ENCODE measurements at regions of chr1 and their contacts with region 1.

Region 1: DNA sequence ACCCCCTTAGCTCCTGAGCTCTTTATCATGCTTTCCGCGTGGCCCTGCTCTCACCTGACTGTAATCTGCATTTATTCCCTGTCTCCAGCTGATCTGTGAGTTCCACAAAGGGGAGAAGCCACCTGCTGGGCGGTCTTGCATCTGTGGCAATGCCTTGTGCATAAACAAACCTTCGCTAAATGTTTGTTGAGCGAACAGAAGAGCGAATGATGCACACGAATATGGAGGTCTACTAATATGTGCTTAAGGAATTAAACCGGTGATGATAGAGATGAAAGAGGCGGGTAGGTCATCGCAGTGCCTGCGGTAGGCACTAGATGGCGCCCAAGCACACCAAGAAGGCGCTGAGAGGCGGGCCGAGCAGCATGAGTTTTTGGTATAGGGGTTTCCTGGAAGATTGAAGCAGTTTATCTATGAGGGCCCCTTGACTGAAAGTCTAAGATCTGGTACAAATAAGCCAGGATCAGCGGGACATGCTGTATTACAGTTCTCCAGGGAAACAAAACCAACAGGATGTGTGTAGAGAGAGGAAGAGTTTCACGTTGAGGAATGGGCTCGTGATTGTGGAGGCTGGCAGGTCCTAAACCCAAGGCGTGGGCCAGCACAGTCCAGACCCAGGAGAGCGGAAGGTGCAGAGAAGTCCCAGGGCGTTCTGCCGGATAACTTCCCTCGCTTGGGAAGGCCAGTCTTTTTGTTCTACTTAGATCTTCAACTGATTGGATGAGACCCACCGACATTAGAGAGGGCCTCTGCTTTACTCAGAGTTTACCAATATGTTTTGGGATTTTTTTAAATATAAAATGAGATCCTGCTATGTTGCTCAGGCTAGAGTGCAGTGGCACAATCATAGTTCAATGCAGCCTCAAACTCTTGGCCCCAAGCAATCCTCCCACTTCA is 34.7 kb downstream of the TOMM20 start:
- DNase-seq: peak; percentile 69
- H3K4me3 ChIP-seq: peak overlapping the region; percentile 24
- H3K27ac ChIP-seq: no peak overlapping the region
- H3K27me3 ChIP-seq: no peaks in the 10 kb centered on the region
- CTCF ChIP-seq: peak; percentile 95

Region 2: GRCh38 chr1:234478481-234479309 is 615.2 kb before region 1 on chr1 and contains the start of gene TARBP1:
- in situ Hi-C with region 1: loop called (anchors 25 kb)
- DNase-seq: peak; percentile 46
- H3K4me3 ChIP-seq: peak within 1 kb of the TSS; percentile 65
- H3K27ac ChIP-seq: peak within 1 kb of the TSS; percentile 24
- H3K27me3 ChIP-seq: no peaks in the 10 kb centered on the region
- CTCF ChIP-seq: peak; percentile 14

Region 3: DNA sequence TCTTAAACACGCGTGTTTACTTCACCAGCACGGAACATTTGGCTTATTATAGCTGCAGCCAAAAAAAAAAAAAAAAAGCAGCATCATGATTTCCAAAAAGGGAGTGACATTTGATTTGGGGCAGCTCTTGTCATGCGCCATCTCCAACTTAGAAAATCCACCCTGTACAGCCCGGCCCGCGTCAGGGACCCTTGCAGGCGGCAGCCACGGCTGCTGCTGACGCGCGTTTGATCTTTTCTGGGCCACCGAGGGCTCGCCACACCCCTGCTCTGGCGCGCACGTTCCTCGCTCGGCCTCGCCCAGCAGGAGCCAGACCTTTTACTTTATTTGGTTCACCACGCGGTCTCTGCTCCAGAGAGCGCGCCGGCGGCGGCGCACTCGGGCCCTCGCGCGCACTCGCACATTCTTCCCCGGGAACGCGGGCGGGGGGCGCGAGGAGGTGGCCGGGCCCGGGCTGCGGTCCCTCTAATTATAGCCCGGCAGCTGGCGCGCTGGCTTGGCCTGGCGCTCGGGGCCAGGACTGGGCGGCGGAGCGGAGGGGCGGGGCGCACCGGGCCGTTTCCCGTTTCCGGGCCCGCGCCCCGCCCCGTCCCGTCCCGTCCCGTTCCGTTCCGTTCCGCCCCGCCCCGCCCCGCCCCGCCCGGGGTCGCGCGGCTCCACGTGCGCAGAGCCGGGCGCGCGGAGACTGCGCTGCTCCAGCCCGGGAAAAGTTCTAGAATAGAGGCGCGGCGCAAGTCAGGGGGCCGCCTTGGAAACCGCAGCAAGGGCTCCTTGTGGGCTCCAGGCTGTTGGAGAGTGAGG is 494.1 kb before region 1 on chr1:
- in situ Hi-C with region 1: loop called (anchors 25 kb)
- DNase-seq: peak; percentile 81
- H3K4me3 ChIP-seq: peak overlapping the region; percentile 47
- H3K27ac ChIP-seq: peak overlapping the region; percentile 98
- H3K27me3 ChIP-seq: no peaks in the 10 kb centered on the region
- CTCF ChIP-seq: peak; percentile 3

Region 4: DNA sequence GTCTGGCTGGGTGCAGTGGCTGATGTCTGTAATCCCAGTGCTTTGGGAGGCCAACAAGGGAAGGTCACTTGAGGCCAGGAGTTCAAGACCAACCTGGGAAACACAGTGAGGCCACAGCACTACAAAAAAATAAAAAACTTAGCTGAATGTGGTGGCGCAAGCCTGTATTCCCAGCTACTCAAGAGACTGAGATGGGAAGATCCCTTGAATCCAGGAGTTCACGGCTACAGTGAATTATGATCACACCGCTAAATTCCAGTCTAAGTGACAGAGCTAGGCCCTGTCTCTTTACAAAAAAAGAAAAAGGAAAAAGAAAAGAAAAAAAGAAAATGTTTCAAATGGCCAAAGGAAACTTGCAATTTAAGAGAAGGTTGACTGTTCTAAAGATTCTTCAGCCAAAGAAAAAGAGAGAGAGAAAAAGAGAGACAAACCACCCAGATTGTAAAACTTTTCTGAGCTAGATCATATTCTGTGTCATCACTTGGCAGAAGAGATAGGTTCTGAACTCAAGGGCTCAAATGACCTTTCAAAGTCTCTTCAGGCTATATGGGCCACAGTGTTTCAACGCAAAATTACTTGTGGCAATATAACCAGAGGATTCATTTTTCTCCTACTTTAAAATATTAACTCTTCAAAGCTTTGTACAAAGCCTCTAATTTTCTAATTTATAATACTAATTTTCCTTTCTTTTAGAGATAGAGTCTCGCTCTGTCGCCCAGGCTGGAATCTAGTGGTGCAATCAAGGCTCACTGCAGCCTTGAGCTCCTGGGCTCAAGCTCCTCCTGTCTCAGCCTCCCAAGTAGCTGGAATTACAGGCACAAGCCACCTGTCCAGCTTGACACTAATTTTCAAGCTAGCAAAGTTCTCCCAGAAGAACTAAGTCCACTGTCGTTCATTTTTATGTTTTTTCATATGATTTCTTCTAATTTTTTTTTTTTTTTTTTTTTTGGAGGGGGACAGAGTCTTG is 213.5 kb after region 1 on chr1:
- in situ Hi-C with region 1: no loop called
- DNase-seq: no peak
- H3K4me3 ChIP-seq: no peak overlapping the region
- H3K27ac ChIP-seq: no peak overlapping the region
- H3K27me3 ChIP-seq: no peaks in the 10 kb centered on the region
- CTCF ChIP-seq: no peak

Measured in brain microvascular endothelial cell (primary cell).